HEK293 (cell line): ENCODE measurements at regions of chr9 and their contacts with region 1.

Region 1: GRCh38 chr9:34759432-34760134 is 49.6 kb upstream of the CCL21 start:
- H3K4me3 ChIP-seq: no peak overlapping the region
- H3K27ac ChIP-seq: no peak overlapping the region
- H3K4me1 ChIP-seq: no peaks in the 10 kb centered on the region
- CTCF ChIP-seq: no peak

Region 2: DNA sequence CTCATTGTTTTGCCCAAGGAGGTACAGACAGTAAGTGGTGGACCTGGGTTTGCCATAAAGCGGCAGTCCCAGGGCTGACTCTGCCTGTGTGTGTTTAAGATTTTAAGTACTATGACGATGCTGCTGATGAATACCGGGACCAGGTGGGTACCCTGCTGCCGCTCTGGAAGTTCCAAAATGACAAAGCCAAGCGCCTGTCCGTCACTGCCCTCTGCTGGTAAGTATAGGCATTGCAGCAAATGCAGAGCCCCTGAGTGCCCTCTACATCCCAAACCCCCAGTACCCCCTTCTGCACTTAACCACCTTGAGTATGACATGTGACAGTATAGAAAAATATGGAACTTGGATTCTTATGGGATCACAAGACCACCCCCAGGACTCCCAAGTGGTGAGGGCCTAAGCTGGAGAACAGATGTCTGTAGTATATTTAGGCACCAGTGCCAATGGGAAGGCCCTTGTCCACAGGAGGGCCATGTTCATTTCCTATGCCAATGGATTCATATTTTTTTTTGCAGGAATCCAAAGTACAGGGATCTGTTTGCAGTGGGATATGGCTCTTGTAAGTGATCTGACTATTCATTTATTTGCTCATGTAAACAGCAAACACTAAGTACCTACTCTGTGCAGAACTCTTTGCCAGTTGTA is 258.8 kb before region 1 on chr9:
- CTCF ChIA-PET with region 1: no interaction called
- POLR2A ChIA-PET with region 1: no interaction called
- H3K4me3 ChIP-seq: no peak overlapping the region
- H3K27ac ChIP-seq: no peak overlapping the region
- H3K4me1 ChIP-seq: no peaks in the 10 kb centered on the region
- CTCF ChIP-seq: peak; percentile 58

Region 3: GRCh38 chr9:34686231-34686630 is 73.4 kb before region 1 on chr9:
- CTCF ChIA-PET with region 1: no interaction called
- POLR2A ChIA-PET with region 1: no interaction called
- H3K4me3 ChIP-seq: no peak overlapping the region
- H3K27ac ChIP-seq: no peak overlapping the region
- H3K4me1 ChIP-seq: no peaks in the 10 kb centered on the region
- CTCF ChIP-seq: no peak

Region 4: DNA sequence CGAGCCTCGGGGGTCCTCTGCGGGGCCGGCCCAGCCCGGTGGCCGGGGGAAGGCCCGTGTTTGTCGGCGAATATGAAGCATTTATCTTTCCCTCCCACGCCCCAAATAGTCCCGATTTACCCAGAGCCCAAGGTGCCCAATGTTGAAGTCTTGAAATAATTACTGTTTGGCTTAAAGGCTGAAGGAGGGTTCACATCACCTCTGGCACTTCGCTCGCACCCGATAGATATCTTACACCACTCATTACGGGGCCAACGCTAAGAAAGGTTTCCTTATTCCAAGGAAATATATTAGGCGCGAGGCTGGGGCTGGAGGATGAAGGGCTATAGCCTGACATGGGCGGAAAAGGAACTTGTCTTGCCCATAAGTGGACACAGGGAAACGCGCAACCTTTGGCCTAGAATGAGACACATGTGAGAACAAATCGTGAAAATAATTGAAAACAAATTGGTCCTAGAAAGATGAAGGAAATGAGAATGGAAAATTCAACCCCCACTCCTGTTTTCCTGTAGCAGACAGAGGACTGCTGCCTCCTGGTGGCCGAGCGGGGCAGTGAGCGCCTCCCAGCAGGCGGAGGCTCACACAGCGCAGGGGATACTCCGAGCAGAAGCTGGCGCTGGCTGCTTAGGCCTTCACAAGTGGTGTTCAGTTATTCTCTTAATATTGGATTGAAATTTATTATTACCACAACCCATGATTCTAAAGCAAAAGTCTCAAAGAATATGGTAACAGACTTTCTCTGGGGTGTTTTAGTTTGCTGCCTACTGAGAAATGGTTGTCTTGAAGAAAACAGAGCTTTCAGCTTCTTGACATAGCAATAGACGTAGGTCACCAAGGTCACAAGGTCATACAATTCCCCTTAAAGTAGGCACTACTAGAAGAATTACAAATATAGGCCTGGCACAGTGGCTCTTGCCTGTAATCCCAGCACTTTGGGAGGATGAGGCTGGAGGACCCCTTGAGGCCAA is 57.5 kb before region 1 on chr9:
- CTCF ChIA-PET with region 1: interaction called, 17 read pairs
- POLR2A ChIA-PET with region 1: no interaction called
- H3K4me3 ChIP-seq: peak overlapping the region; percentile 48
- H3K27ac ChIP-seq: no peak overlapping the region
- H3K4me1 ChIP-seq: peaks cover 2% of the 10 kb centered on the region; the same call in 1 of the 2 replicates
- CTCF ChIP-seq: peak; percentile 59

Region 5: GRCh38 chr9:34869390-34869789 is 109.8 kb after region 1 on chr9:
- CTCF ChIA-PET with region 1: interaction called, 28 read pairs
- POLR2A ChIA-PET with region 1: no interaction called
- H3K4me3 ChIP-seq: no peak overlapping the region
- H3K27ac ChIP-seq: no peak overlapping the region
- H3K4me1 ChIP-seq: no peaks in the 10 kb centered on the region
- CTCF ChIP-seq: 0 out of 2 replicates have a peak, but pooled peaks have one; percentile 24

Region 6: GRCh38 chr9:34989003-34989945 is 229.7 kb after region 1 on chr9 and contains the start of gene DNAJB5:
- CTCF ChIA-PET with region 1: interaction called, 18 read pairs
- POLR2A ChIA-PET with region 1: no interaction called
- H3K4me3 ChIP-seq: peak within 1 kb of the TSS; percentile 76
- H3K27ac ChIP-seq: no peak within 1 kb of the TSS; the same call in 1 of the 2 replicates
- H3K4me1 ChIP-seq: peaks cover 2% of the 10 kb centered on the region; the same call in 1 of the 2 replicates
- CTCF ChIP-seq: no peak

Region 7: GRCh38 chr9:34994260-34994899 is 234.8 kb after region 1 on chr9:
- CTCF ChIA-PET with region 1: interaction called, 18 read pairs
- POLR2A ChIA-PET with region 1: no interaction called
- H3K4me3 ChIP-seq: no peak overlapping the region
- H3K27ac ChIP-seq: no peak overlapping the region
- H3K4me1 ChIP-seq: peaks cover 2% of the 10 kb centered on the region; the same call in 1 of the 2 replicates
- CTCF ChIP-seq: peak; percentile 43; the same call in 1 of the 2 replicates

Region 8: GRCh38 chr9:35051069-35051967 is 291.7 kb after region 1 on chr9:
- CTCF ChIA-PET with region 1: interaction called, 13 read pairs
- POLR2A ChIA-PET with region 1: interaction called, 3 read pairs
- H3K4me3 ChIP-seq: no peak overlapping the region
- H3K27ac ChIP-seq: no peak overlapping the region
- H3K4me1 ChIP-seq: no peaks in the 10 kb centered on the region
- CTCF ChIP-seq: no peak

Region 9: GRCh38 chr9:35470894-35471293 is 711.3 kb after region 1 on chr9:
- CTCF ChIA-PET with region 1: interaction called, 10 read pairs
- POLR2A ChIA-PET with region 1: no interaction called
- H3K4me3 ChIP-seq: no peak overlapping the region
- H3K27ac ChIP-seq: no peak overlapping the region
- H3K4me1 ChIP-seq: no peaks in the 10 kb centered on the region
- CTCF ChIP-seq: no peak